Heart left ventricle (tissue), 16 donors: ENCODE measurements at regions of chr13 and their contacts with region 1.

Region 1: DNA sequence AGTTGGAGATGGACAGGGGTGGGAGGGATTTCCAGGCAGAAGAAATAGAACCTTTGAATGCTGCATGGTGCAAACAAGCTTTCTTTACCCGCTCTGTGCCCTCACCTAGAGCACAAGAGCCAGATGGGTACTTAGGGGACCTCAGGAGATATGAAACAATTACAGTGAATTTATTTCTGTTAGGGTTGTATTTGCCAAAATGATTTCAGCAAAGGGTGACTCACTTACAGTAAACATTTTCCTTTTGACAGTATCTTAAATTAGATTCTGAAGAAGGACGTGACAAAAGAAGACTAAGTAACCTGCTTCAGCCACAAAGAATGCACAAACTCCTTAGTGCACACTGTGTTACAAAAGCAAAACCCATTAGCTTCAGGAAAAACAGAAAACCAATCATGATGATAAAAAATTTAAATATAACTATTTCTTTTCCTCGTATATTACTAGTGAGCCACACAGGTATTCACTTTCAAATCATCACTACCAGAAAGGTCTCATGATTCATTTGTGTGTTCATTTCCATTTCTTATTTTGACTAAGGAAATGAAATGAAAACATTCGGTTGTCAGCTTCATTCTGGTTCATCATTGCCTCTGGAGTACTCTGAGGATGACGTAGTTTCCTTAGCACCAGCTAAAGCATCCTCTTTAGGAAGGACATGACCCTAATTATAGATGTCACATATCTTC is 158.8 kb downstream of the NHLRC3 start:
- DNase-seq: no peak
- ATAC-seq: peak in 3 of 4 donors; percentile 61 to 66 (median 65)
- H3K4me3 ChIP-seq: no peak overlapping the region
- H3K27ac ChIP-seq: peak overlapping the region in 11 of 12 donors; percentile 1 to 64 (median 19)
- H3K4me1 ChIP-seq: peaks cover 0 to 27% (median 12%) of the 10 kb centered on the region in 12 donors
- H3K27me3 ChIP-seq: no peaks in the 10 kb centered on the region
- CTCF ChIP-seq: no peak
- POLR2A ChIP-seq: no peak

Region 2: DNA sequence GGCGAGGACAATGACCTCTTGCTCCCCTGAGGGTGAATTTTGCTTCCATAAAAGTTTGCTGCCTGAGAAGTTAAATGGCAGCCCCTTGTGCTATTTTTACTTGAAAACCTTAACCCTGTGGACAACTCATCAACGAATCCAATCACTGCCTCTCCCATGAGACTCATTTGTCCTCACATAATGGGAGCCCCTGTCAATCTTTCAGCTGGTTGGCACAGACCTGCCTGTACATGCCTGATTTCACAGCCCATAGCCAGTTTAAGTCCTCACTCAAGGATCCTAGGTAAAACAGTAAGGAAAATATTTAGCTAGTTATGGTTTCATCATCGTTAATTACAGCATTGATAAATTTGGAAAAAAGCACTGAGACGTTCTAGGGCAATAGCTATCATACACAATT is 48.6 kb after region 1 on chr13:
- intact Hi-C with region 1: loop called in 1 of 10 experiments (anchors 10 kb)
- DNase-seq: no peak
- ATAC-seq: no peak
- H3K4me3 ChIP-seq: no peak overlapping the region
- H3K27ac ChIP-seq: no peak overlapping the region
- H3K4me1 ChIP-seq: peaks cover 0 to 12% (median 0%) of the 10 kb centered on the region in 12 donors
- H3K27me3 ChIP-seq: no peaks in the 10 kb centered on the region
- CTCF ChIP-seq: no peak
- POLR2A ChIP-seq: no peak

Region 3: GRCh38 chr13:39462428-39462827 is 265.3 kb after region 1 on chr13:
- intact Hi-C with region 1: no loop called
- DNase-seq: no peak
- ATAC-seq: peak; percentile 56 to 91 (median 86)
- H3K4me3 ChIP-seq: peak overlapping the region in 7 of 12 donors; percentile 3 to 32 (median 11)
- H3K27ac ChIP-seq: peak overlapping the region; percentile 6 to 80 (median 67)
- H3K4me1 ChIP-seq: peaks cover 0 to 79% (median 35%) of the 10 kb centered on the region in 12 donors
- H3K27me3 ChIP-seq: no peaks in the 10 kb centered on the region
- CTCF ChIP-seq: no peak
- POLR2A ChIP-seq: no peak

Region 4: GRCh38 chr13:39516096-39516495 is 319.0 kb after region 1 on chr13:
- intact Hi-C with region 1: no loop called
- DNase-seq: peak in 4 of 5 donors; percentile 34 to 47 (median 42)
- ATAC-seq: peak; percentile 81 to 90 (median 85)
- H3K4me3 ChIP-seq: no peak overlapping the region
- H3K27ac ChIP-seq: peak overlapping the region in 11 of 12 donors; percentile 1 to 82 (median 48)
- H3K4me1 ChIP-seq: peaks cover 10 to 67% (median 29%) of the 10 kb centered on the region in 12 donors
- H3K27me3 ChIP-seq: no peaks in the 10 kb centered on the region
- CTCF ChIP-seq: no peak
- POLR2A ChIP-seq: no peak